ENCODE measurements at regions of chr6 and their contacts with region 1.

Region 1: GRCh38 chr6:42547407-42548329 is 16.2 kb upstream of the UBR2 start:
- DNase-seq: peak; percentile 96
- H3K4me3 Mint-ChIP-seq: peak overlapping the region; percentile 68
- H3K27ac Mint-ChIP-seq: peak overlapping the region; percentile 58
- H3K4me1 Mint-ChIP-seq: peaks cover 11% of the 10 kb centered on the region
- H3K27me3 Mint-ChIP-seq: no peaks in the 10 kb centered on the region
- CTCF ChIP-seq: peak; percentile 97

Region 2: DNA sequence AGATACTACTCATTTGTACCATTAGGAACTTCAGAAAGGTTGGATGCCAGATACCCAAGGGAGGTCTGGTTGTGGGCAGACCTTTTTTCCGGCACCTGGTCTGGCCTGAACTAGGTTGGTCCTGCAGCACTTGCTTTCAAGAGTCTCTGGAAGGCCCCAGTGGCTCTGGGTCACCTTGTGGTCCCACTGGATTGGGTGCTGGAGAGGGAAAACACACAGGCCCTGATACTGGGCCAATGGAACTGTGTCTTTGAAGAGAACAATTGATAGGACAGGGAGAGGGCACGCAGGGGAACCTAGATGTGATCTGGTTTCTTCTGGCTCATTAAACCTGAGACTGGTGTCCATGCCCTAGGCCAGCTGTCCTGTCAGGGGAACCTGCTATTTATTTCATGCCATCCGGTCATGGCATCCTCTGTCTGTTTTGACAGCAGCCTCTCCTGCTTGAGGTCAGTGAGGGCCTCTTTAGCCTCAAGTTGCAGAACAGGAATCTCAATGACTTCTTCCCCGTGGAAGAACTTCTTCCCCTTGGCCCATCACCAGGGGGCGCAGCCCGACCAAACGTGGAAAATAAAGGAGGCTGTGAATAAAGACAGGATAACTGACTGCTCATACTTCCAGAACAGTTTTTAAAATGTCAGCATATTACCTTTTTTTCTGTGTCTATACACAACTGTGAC is 472.4 kb before region 1 on chr6:
- CTCF ChIA-PET with region 1: no interaction called
- intact Hi-C with region 1: loop called (anchors 10 kb)
- DNase-seq: peak; percentile 93
- H3K4me3 Mint-ChIP-seq: no peak overlapping the region
- H3K27ac Mint-ChIP-seq: no peak overlapping the region
- H3K4me1 Mint-ChIP-seq: no peaks in the 10 kb centered on the region
- H3K27me3 Mint-ChIP-seq: no peaks in the 10 kb centered on the region
- CTCF ChIP-seq: peak; percentile 87

Region 3: DNA sequence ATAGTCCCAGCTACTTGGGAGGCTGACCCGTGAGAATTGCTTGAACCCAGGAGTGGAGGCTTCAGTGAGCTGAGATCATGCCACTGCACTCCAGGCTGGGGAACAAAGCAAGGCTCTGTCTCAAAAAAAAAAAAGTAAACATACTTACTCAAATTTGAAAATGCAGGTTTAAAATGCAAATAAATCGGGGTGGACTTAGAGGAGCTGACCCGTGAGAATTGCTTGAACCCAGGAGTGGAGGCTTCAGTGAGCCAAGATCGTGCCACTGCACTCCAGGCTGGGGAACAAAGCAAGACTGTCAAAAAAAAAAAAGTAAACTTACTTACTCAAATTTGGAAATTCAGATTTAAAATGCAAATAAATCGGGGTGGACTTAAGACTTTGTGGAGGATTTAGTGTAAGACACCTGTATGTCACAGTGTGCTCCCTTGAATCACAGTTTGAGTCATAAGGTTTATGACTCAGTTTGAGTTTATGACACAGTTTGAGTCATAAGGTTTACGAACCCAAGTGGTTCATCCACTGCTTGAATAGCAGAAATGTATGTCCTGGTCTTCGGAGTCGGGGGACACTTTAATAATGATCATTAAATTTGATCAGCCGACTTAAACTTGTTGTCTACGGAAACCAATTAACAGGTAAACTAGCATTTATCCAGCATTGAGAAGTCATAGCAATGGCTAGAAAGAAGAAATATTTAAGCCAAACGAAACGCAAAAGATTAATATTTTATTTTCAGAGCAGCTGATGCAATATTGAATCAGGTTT is 323.3 kb before region 1 on chr6:
- CTCF ChIA-PET with region 1: interaction called, 15 read pairs
- intact Hi-C with region 1: no loop called
- DNase-seq: peak; percentile 40
- H3K4me3 Mint-ChIP-seq: peak overlapping the region; percentile 56
- H3K27ac Mint-ChIP-seq: peak overlapping the region; percentile 100
- H3K4me1 Mint-ChIP-seq: peaks cover 79% of the 10 kb centered on the region
- H3K27me3 Mint-ChIP-seq: no peaks in the 10 kb centered on the region
- CTCF ChIP-seq: no peak

Region 4: DNA sequence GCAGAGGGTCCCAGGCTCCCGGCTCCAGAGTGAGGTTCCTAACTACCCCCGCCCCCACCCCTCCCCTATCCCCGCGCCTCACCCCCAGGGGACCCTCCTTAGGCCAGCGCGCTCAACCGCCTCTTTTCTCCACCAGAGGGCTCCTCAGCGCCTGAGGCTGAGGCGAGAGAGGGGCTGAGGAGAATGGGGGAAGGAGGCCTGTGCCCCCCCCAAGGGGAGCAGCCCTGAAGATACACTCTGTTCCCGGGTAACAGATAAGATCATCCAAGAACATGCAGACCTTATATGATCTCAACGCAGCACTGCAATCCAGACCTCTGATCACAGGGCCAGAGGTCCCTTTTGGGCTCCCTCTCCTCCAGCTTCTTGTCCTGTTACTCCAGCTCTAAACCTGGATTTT is 286.7 kb before region 1 on chr6:
- CTCF ChIA-PET with region 1: interaction called, 25 read pairs
- intact Hi-C with region 1: loop called (anchors 5 kb)
- DNase-seq: peak; percentile 60
- H3K4me3 Mint-ChIP-seq: no peak overlapping the region
- H3K27ac Mint-ChIP-seq: no peak overlapping the region
- H3K4me1 Mint-ChIP-seq: no peaks in the 10 kb centered on the region
- H3K27me3 Mint-ChIP-seq: no peaks in the 10 kb centered on the region
- CTCF ChIP-seq: peak; percentile 83

Region 5: GRCh38 chr6:42532038-42532669 is 15.5 kb before region 1 on chr6:
- CTCF ChIA-PET with region 1: interaction called, 12 read pairs
- intact Hi-C with region 1: no loop called
- DNase-seq: peak; percentile 46
- H3K4me3 Mint-ChIP-seq: no peak overlapping the region
- H3K27ac Mint-ChIP-seq: no peak overlapping the region
- H3K4me1 Mint-ChIP-seq: no peaks in the 10 kb centered on the region
- H3K27me3 Mint-ChIP-seq: no peaks in the 10 kb centered on the region
- CTCF ChIP-seq: peak; percentile 95

Region 6: GRCh38 chr6:43086022-43086658 is 538.5 kb after region 1 on chr6:
- CTCF ChIA-PET with region 1: no interaction called
- intact Hi-C with region 1: no loop called
- DNase-seq: no peak
- H3K4me3 Mint-ChIP-seq: no peak overlapping the region
- H3K27ac Mint-ChIP-seq: peak overlapping the region; percentile 29
- H3K4me1 Mint-ChIP-seq: peaks cover 9% of the 10 kb centered on the region
- H3K27me3 Mint-ChIP-seq: no peaks in the 10 kb centered on the region
- CTCF ChIP-seq: no peak